Common myeloid progenitor, CD34-positive (primary cell): ENCODE measurements at regions of chr4 and their contacts with region 1.

Region 1: GRCh38 chr4:22410645-22411247 is 105.1 kb downstream of the ADGRA3 start:
- DNase-seq: peak in 2 of 3 donors; percentile 41 to 49
- H3K4me3 ChIP-seq: no peak overlapping the region
- H3K27ac ChIP-seq: no peak overlapping the region
- H3K4me1 ChIP-seq: peaks cover 0 to 3% (median 0%) of the 10 kb centered on the region in 4 experiments
- H3K27me3 ChIP-seq: no peaks in the 10 kb centered on the region

Region 2: GRCh38 chr4:22389240-22389870 is 21.4 kb before region 1 on chr4:
- CTCF ChIA-PET with region 1: interaction called, 27 read pairs
- POLR2A ChIA-PET with region 1: no interaction called
- DNase-seq: peak; percentile 73 to 89 (median 86)
- H3K4me3 ChIP-seq: no peak overlapping the region
- H3K27ac ChIP-seq: no peak overlapping the region
- H3K4me1 ChIP-seq: no peaks in the 10 kb centered on the region
- H3K27me3 ChIP-seq: no peaks in the 10 kb centered on the region

Region 3: GRCh38 chr4:22434895-22435294 is 24.1 kb after region 1 on chr4:
- CTCF ChIA-PET with region 1: interaction called, 10 read pairs
- POLR2A ChIA-PET with region 1: no interaction called
- DNase-seq: peak; percentile 32 to 38 (median 37)
- H3K4me3 ChIP-seq: no peak overlapping the region
- H3K27ac ChIP-seq: no peak overlapping the region
- H3K4me1 ChIP-seq: no peaks in the 10 kb centered on the region
- H3K27me3 ChIP-seq: no peaks in the 10 kb centered on the region

Region 4: DNA sequence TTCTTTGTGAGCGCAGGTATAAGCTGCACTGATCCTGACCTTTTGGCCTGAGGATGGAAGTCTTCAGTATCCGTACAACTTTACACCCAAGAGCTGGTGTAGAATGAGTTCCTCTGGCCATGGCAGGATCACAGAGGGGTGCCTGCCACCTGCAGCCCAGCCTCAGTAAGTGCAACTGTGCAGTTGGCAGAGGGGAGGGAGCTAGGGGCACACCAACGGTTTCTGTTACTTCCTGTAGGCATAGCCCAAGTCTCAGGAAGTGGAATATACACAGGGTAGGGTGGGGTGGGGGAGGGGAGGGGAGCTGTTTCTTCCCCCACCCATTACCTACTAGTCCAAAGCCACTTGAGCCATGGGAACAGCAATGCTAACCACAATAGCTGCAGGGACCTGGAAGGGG is 196.6 kb after region 1 on chr4:
- CTCF ChIA-PET with region 1: interaction called, 20 read pairs
- POLR2A ChIA-PET with region 1: no interaction called
- DNase-seq: peak; percentile 77 to 93 (median 92)
- H3K4me3 ChIP-seq: no peak overlapping the region
- H3K27ac ChIP-seq: no peak overlapping the region
- H3K4me1 ChIP-seq: peaks cover 4 to 10% (median 5%) of the 10 kb centered on the region in 4 experiments
- H3K27me3 ChIP-seq: no peaks in the 10 kb centered on the region

Region 5: GRCh38 chr4:22692736-22693135 is 282.0 kb after region 1 on chr4 and contains the start of gene GBA3:
- CTCF ChIA-PET with region 1: interaction called, 17 read pairs
- POLR2A ChIA-PET with region 1: no interaction called
- DNase-seq: no peak
- H3K4me3 ChIP-seq: no peak within 1 kb of the TSS
- H3K27ac ChIP-seq: no peak within 1 kb of the TSS
- H3K4me1 ChIP-seq: peaks cover 2 to 7% (median 4%) of the 10 kb centered on the region in 4 experiments
- H3K27me3 ChIP-seq: peaks cover 0 to 3% (median 0%) of the 10 kb centered on the region in 5 experiments